Vagina (tissue), 2 donors: ENCODE measurements at regions of chrX and their contacts with region 1.

Region 1: GRCh38 chrX:147859666-147860065 is 52.1 kb upstream of the FMR1 start:
- DNase-seq: no peak
- H3K4me3 ChIP-seq: no peak overlapping the region
- H3K27ac ChIP-seq: no peak overlapping the region
- H3K4me1 ChIP-seq: no peaks in the 10 kb centered on the region
- H3K27me3 ChIP-seq: no peaks in the 10 kb centered on the region
- CTCF ChIP-seq: no peak
- POLR2A ChIP-seq: no peak

Region 2: GRCh38 chrX:149830192-149830873 is 1970.7 kb after region 1 on chrX:
- intact Hi-C with region 1: loop called (anchors 5 kb)
- DNase-seq: no peak
- H3K4me3 ChIP-seq: peak overlapping the region; percentile 15 to 32
- H3K27ac ChIP-seq: peak overlapping the region; percentile 72
- H3K4me1 ChIP-seq: no peaks in the 10 kb centered on the region
- H3K27me3 ChIP-seq: no peaks in the 10 kb centered on the region
- CTCF ChIP-seq: no peak
- POLR2A ChIP-seq: no peak